Activated CD8-positive, alpha-beta T cell treated with anti-CD3 and anti-CD28 coated beads for 36 hours (primary cell): ENCODE measurements at regions of chr2 and their contacts with region 1.

Region 1: DNA sequence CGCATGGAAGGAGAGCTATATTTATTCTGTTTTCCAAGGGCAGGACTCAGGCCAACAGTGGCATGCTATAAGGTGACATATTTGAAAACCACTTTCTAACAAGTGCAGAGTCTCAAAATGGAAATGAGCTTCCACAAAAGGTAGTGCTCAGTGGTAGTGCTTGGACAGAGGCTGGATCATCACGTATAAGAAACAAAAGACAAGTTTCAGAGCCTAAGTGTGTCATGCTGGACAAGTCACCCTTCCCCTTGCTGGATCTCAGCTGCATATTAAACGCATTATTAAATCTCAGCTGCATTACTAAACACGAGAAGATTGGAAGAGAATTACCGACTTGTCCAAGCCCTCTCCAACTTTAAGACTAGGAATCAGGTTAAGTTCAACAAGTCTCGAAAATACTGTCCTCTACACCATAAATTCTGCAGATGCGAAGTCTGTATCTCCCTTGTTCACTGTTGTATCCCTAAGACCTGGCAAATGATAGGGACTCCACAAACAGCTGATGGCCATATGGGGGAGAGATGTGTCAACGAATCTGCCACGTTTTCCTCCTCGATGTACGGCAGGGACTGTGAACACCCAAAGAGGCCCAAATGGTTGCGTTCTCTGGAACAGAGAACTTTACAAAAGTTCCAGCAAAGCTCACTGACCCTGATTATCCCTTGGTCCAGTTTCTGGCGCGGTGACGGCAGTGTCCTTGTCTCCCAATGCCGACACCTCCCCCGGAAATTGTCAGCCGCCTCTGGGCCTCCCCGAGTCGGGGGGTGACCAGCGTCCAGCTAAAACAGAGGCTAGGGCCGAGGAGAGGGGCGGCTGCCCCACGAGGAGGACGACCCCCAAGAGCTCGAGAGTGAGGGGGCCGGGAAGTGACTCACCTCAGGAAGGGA is 611 bp downstream of the NOL10 start:
- DNase-seq: peak; percentile 18
- ATAC-seq: peak; percentile 19
- H3K4me3 Mint-ChIP-seq: no peak overlapping the region
- H3K27ac Mint-ChIP-seq: no peak overlapping the region
- H3K4me1 Mint-ChIP-seq: peaks cover 6% of the 10 kb centered on the region
- H3K27me3 Mint-ChIP-seq: no peaks in the 10 kb centered on the region
- CTCF ChIP-seq: no peak

Region 2: GRCh38 chr2:10678222-10678621 is 10.9 kb before region 1 on chr2:
- CTCF ChIA-PET with region 1: interaction called, 11 read pairs
- POLR2A ChIA-PET with region 1: interaction called, 4 read pairs
- intact Hi-C with region 1: no loop called
- DNase-seq: no peak
- ATAC-seq: no peak
- H3K4me3 Mint-ChIP-seq: no peak overlapping the region
- H3K27ac Mint-ChIP-seq: no peak overlapping the region
- H3K4me1 Mint-ChIP-seq: peaks cover 36% of the 10 kb centered on the region
- H3K27me3 Mint-ChIP-seq: no peaks in the 10 kb centered on the region
- CTCF ChIP-seq: peak; percentile 32